ENCODE measurements at regions of chr13 and their contacts with region 1.

Region 1: GRCh38 chr13:46126552-46127357 is 21.9 kb upstream of the CPB2 start:
- DNase-seq: peak; percentile 58 to 72 (median 65)
- H3K4me3 ChIP-seq: no peak overlapping the region
- H3K4me3 Mint-ChIP-seq: peak overlapping the region in 1 of 8 donors; percentile 28
- H3K27ac ChIP-seq: no peak overlapping the region
- H3K27ac Mint-ChIP-seq: peak overlapping the region; percentile 62 to 94 (median 83)
- H3K4me1 ChIP-seq: peaks cover 44% of the 10 kb centered on the region
- H3K4me1 Mint-ChIP-seq: peaks cover 32 to 53% (median 44%) of the 10 kb centered on the region in 4 donors
- H3K27me3 ChIP-seq: no peaks in the 10 kb centered on the region
- H3K27me3 Mint-ChIP-seq: no peaks in the 10 kb centered on the region

Region 2: DNA sequence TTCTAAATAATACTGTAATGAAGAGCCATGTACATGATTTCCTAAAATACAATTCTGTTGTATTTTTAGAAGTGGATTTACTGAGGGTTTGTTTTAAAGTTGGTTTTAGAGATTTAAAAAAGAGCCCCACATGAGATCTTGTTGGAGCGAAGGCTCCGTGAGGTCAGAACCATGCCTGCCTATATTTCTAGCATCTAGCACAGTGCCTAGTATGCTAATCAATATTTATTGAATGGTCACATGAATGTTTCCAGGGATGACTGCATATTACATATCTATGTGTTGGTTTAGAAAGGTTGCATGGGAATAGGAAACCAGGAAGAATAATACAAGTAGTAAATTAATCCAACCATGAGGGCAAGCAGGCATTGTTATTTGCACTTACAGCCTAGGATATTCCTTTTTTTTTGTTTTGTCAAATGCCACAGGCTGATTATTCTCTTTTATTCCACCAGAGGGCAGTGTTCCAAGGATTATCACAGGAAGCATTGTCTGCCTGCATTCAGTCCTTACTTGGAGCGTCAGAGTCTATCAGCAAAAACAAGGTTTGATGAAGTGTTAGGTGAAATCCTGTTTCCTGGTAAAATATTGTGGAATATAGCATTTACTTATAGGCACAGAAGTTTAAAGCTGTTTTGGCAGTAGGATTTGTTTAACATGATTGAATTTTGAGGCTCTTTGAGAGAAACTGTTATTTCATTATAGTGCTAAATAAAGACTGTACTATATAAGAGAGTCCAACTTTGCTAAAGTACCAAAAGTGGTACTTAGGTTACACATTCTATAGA is 615.3 kb before region 1 on chr13:
- CTCF ChIA-PET with region 1: interaction called, 3 read pairs
- POLR2A ChIA-PET with region 1: no interaction called
- intact Hi-C with region 1: loop called (anchors 2 kb)
- DNase-seq: peak in 4 of 5 donors; percentile 55 to 68 (median 62)
- H3K4me3 ChIP-seq: no peak overlapping the region
- H3K4me3 Mint-ChIP-seq: no peak overlapping the region
- H3K27ac ChIP-seq: no peak overlapping the region
- H3K27ac Mint-ChIP-seq: peak overlapping the region; percentile 6 to 89 (median 59)
- H3K4me1 ChIP-seq: peaks cover 3% of the 10 kb centered on the region
- H3K4me1 Mint-ChIP-seq: peaks cover 4 to 11% (median 9%) of the 10 kb centered on the region in 4 donors
- H3K27me3 ChIP-seq: no peaks in the 10 kb centered on the region
- H3K27me3 Mint-ChIP-seq: no peaks in the 10 kb centered on the region

Region 3: GRCh38 chr13:45807520-45808099 is 319.1 kb before region 1 on chr13:
- CTCF ChIA-PET with region 1: interaction called, 23 read pairs
- POLR2A ChIA-PET with region 1: no interaction called
- intact Hi-C with region 1: loop called (anchors 1 kb)
- DNase-seq: peak in 4 of 5 donors; percentile 12 to 32 (median 16)
- H3K4me3 ChIP-seq: no peak overlapping the region
- H3K4me3 Mint-ChIP-seq: no peak overlapping the region
- H3K27ac ChIP-seq: no peak overlapping the region
- H3K27ac Mint-ChIP-seq: no peak overlapping the region
- H3K4me1 ChIP-seq: no peaks in the 10 kb centered on the region
- H3K4me1 Mint-ChIP-seq: peaks cover 0 to 9% (median 5%) of the 10 kb centered on the region in 4 donors
- H3K27me3 ChIP-seq: no peaks in the 10 kb centered on the region
- H3K27me3 Mint-ChIP-seq: no peaks in the 10 kb centered on the region

Region 4: DNA sequence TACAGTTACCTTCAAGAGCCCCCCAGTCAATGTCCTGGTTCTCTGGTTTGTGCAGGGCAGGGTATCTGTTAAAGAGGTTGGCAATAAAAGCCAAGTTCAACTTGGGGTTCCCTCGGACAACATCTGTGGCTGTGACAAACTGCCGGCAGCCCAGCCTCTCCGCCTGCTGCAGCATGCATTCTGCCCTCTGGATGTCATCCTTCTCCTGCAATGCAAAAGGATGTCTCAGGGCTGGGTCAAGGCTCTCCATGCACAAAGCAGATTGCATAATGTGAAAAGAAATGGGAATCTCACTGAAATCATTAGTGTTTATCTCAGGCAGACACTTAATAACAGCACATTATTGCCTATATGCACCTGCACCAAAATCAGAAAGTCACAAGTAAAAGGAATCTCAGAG is 20.1 kb after region 1 on chr13:
- CTCF ChIA-PET with region 1: interaction called, 19 read pairs
- POLR2A ChIA-PET with region 1: interaction called, 3 read pairs
- intact Hi-C with region 1: no loop called
- DNase-seq: no peak
- H3K4me3 ChIP-seq: no peak overlapping the region
- H3K4me3 Mint-ChIP-seq: no peak overlapping the region
- H3K27ac ChIP-seq: no peak overlapping the region
- H3K27ac Mint-ChIP-seq: peak overlapping the region in 4 of 7 donors; percentile 42 to 64 (median 53)
- H3K4me1 ChIP-seq: peaks cover 7% of the 10 kb centered on the region
- H3K4me1 Mint-ChIP-seq: peaks cover 22 to 36% (median 27%) of the 10 kb centered on the region in 4 donors
- H3K27me3 ChIP-seq: no peaks in the 10 kb centered on the region
- H3K27me3 Mint-ChIP-seq: no peaks in the 10 kb centered on the region

Region 5: GRCh38 chr13:46288570-46289259 is 162.0 kb after region 1 on chr13:
- CTCF ChIA-PET with region 1: interaction called, 19 read pairs
- POLR2A ChIA-PET with region 1: interaction called, 4 read pairs
- intact Hi-C with region 1: loop called (anchors 1 kb)
- DNase-seq: peak in 4 of 5 donors; percentile 67 to 71 (median 69)
- H3K4me3 ChIP-seq: no peak overlapping the region
- H3K4me3 Mint-ChIP-seq: no peak overlapping the region
- H3K27ac ChIP-seq: no peak overlapping the region
- H3K27ac Mint-ChIP-seq: peak overlapping the region in 3 of 7 donors; percentile 26 to 53 (median 42)
- H3K4me1 ChIP-seq: peaks cover 7% of the 10 kb centered on the region
- H3K4me1 Mint-ChIP-seq: peaks cover 3 to 22% (median 8%) of the 10 kb centered on the region in 4 donors
- H3K27me3 ChIP-seq: no peaks in the 10 kb centered on the region
- H3K27me3 Mint-ChIP-seq: no peaks in the 10 kb centered on the region

Region 6: GRCh38 chr13:46507981-46508380 is 381.2 kb after region 1 on chr13:
- CTCF ChIA-PET with region 1: no interaction called
- POLR2A ChIA-PET with region 1: no interaction called
- intact Hi-C with region 1: no loop called
- DNase-seq: no peak
- H3K4me3 ChIP-seq: no peak overlapping the region
- H3K4me3 Mint-ChIP-seq: no peak overlapping the region
- H3K27ac ChIP-seq: no peak overlapping the region
- H3K27ac Mint-ChIP-seq: no peak overlapping the region
- H3K4me1 ChIP-seq: no peaks in the 10 kb centered on the region
- H3K4me1 Mint-ChIP-seq: no peaks in the 10 kb centered on the region
- H3K27me3 ChIP-seq: no peaks in the 10 kb centered on the region
- H3K27me3 Mint-ChIP-seq: peaks cover 7 to 9% of the 10 kb centered on the region in 2 donors